ENCODE measurements at regions of chrX and their contacts with region 1.

Region 1: GRCh38 chrX:42714981-42715700 is 62.8 kb downstream of the PPP1R2C start:
- DNase-seq: peak; percentile 58
- ATAC-seq: peak; percentile 55
- H3K4me3 Mint-ChIP-seq: no peak overlapping the region
- H3K27ac Mint-ChIP-seq: no peak overlapping the region
- H3K4me1 Mint-ChIP-seq: peaks cover 6% of the 10 kb centered on the region
- H3K27me3 Mint-ChIP-seq: no peaks in the 10 kb centered on the region

Region 2: GRCh38 chrX:41858161-41858775 is 856.9 kb before region 1 on chrX:
- CTCF ChIA-PET with region 1: no interaction called
- POLR2A ChIA-PET with region 1: no interaction called
- intact Hi-C with region 1: loop called in 1 of 2 experiments (anchors 5 kb)
- DNase-seq: no peak
- ATAC-seq: no peak
- H3K4me3 Mint-ChIP-seq: no peak overlapping the region
- H3K27ac Mint-ChIP-seq: no peak overlapping the region
- H3K4me1 Mint-ChIP-seq: peaks cover 16% of the 10 kb centered on the region
- H3K27me3 Mint-ChIP-seq: no peaks in the 10 kb centered on the region